ENCODE measurements at regions of chr1 and their contacts with region 1.

Region 1: DNA sequence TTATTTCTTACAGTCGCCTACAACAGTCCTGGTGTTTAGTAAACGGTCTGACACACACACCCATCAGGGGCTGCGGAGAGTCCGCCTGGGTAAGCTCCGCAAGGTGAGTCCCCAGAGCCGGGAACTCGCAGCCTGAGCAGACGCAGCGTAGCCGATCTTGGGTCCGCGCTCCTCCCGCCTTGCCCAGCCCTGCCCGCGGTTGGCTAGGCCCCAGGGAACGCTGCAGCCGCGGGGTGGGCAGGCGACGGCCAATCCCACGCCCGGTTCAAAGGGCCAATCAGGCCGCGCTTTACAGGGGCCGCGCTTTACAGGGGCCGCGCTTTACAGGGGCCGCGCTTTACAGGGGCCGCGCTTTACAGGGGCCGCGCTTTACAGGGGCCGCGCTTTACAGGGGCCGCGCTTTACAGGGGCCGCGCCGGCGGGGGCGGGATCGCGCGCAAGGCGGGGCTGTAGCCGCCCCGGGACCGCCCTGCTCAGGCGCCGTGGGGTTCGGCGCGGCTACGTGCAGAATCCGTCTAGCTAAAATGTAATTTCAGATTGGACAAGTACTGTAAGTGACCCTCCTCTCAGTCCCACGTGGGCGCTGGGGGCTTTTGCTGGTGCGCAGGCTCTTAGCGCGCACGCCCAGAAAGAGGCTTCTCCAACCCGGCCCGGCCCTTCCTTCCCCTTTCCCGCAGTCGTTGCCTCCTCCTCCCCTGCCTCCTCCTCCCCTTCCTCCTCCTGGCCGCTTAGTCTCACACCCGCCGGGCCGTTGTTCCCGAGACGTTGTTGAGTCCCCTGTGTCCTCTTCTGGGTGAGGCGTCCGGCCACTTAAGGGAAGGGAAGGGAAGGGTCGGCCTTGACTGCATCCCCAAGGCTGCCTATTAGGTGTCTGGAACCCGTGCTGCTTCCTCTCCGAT is at the start of gene FGGY:
- DNase-seq: peak; percentile 86
- H3K4me3 Mint-ChIP-seq: peak within 1 kb of the TSS; percentile 91
- H3K27ac Mint-ChIP-seq: peak within 1 kb of the TSS; percentile 91
- H3K4me1 Mint-ChIP-seq: peaks cover 48% of the 10 kb centered on the region
- H3K27me3 Mint-ChIP-seq: no peaks in the 10 kb centered on the region
- total RNA-seq, gene FGGY: 7.1 and 8.2 TPM in 2 replicates

Region 2: DNA sequence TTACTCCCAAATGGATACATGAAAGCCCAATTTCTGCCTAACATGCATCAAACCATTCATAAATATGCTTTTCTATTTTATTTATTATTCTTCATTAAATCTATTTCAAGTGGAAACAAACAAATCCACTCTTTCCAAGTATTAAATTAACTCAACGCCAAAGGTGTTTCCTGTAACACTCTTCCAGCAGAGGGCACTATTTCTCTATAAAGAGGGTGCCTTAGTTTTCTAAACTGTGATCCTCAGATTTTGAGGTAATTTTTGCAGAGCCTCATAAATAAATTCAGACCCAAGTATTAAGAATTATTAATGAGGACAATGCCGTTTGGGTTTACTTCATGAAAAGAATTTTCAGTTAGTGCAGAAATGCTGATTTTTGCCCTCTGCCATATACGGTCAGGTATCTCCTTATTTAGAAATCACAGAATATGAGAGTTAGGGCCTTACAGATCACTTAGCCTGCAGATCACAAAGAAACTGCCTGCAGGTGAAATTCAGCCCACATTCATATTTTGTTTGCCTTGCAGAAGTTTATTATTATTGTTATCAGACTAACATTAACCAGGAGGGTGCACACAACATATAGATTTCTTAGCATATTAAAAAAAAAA is 556.6 kb before region 1 on chr1:
- intact Hi-C with region 1: loop called (anchors 2 kb)
- DNase-seq: no peak
- H3K4me3 Mint-ChIP-seq: no peak overlapping the region
- H3K27ac Mint-ChIP-seq: no peak overlapping the region
- H3K4me1 Mint-ChIP-seq: peaks cover 18% of the 10 kb centered on the region
- H3K27me3 Mint-ChIP-seq: peaks cover 7% of the 10 kb centered on the region

Region 3: GRCh38 chr1:59046730-59047157 is 249.9 kb before region 1 on chr1:
- intact Hi-C with region 1: loop called (anchors 2 kb)
- DNase-seq: peak; percentile 62
- H3K4me3 Mint-ChIP-seq: peak overlapping the region; percentile 67
- H3K27ac Mint-ChIP-seq: peak overlapping the region; percentile 71
- H3K4me1 Mint-ChIP-seq: peaks cover 77% of the 10 kb centered on the region
- H3K27me3 Mint-ChIP-seq: no peaks in the 10 kb centered on the region

Region 4: DNA sequence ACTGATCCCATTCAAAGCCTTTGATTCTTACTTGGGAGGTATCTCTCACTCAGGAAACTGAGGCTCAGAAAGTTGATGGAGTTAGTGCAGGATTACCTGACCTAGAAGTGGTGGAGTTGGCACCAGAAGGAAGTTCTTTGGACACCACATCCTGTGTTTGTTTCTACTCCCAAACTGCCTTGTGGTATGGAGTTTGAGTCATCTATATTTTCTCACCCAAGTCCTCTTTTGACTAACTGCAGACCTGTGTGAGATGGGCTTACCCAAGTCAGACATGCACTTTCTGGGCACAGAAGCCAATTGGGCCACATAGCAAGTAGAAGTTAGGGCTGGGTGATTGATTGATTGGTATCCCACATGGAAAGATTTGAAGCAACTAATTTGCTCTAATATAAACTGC is 36.4 kb after region 1 on chr1:
- intact Hi-C with region 1: loop called (anchors 1 kb)
- DNase-seq: peak; percentile 47
- H3K4me3 Mint-ChIP-seq: peak overlapping the region; percentile 15
- H3K27ac Mint-ChIP-seq: peak overlapping the region; percentile 78
- H3K4me1 Mint-ChIP-seq: peaks cover 44% of the 10 kb centered on the region
- H3K27me3 Mint-ChIP-seq: no peaks in the 10 kb centered on the region

Region 5: GRCh38 chr1:59354709-59355337 is 58.2 kb after region 1 on chr1:
- intact Hi-C with region 1: loop called (anchors 2 kb)
- DNase-seq: no peak
- H3K4me3 Mint-ChIP-seq: peak overlapping the region; percentile 13
- H3K27ac Mint-ChIP-seq: peak overlapping the region; percentile 94
- H3K4me1 Mint-ChIP-seq: peaks cover 41% of the 10 kb centered on the region
- H3K27me3 Mint-ChIP-seq: peaks cover 2% of the 10 kb centered on the region

Measured in activated T-helper 1 cell treated with anti-CD3 and anti-CD28 coated beads, Interleukin-12 subunit alpha, Interleukin-12 subunit beta, Interleukin-2, Interleukin-4 antibody, amounts not matched to agents 30 ng/mL and 10 ng/mL and 1 ng/mL, durations not matched to agents 14 hours and 24 hours and 36 hours (primary cell).